Activated T-helper 2 cell treated with anti-CD3 and anti-CD28 coated beads, Interferon-gamma antibody, Interleukin-2, Interleukin-4, amounts not matched to agents 10 μg/mL and 5 μg/mL and 100 μg/mL, durations not matched to agents 14 hours and 24 hours and 36 hours (primary cell): ENCODE measurements at regions of chr18 and their contacts with region 1.

Region 1: GRCh38 chr18:9117980-9118841 is 15.7 kb downstream of the NDUFV2 start:
- DNase-seq: no peak
- H3K4me3 Mint-ChIP-seq: peak overlapping the region; percentile 39
- H3K27ac Mint-ChIP-seq: peak overlapping the region; percentile 84
- H3K4me1 Mint-ChIP-seq: peaks cover 51% of the 10 kb centered on the region
- H3K27me3 Mint-ChIP-seq: no peaks in the 10 kb centered on the region

Region 2: DNA sequence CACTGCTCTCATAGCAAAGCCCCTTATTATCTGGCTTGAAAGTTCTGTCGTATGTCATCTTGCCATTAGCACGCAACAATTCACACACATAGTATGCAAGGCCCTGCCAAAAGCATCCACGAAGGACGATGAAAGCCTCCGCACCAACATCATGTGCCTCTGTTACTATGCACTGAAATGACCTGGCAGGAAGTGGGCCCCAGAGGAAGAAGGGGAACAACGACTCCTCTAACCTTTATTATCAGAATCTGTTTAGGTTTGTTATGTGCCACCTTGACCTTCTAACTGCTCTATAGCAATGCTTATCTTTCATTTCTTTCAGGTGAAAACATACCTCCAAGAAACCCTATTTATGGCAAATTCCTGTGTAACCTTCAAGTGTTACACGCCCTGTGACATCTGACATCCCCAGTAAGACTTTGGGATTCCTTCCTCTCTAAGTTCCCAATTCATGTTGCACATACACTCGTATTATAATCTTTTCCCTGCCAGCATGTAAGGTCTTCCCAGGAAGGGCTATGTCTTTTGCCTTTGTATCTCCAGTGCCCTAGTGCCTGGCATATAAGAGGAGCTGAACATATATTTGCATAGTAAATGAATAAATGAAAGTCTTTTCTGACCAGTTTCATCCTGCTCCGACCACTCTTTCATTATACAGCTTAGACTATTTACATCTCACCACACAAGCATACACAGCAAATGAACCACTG is 22.8 kb before region 1 on chr18:
- intact Hi-C with region 1: loop called (anchors 1 kb)
- DNase-seq: peak; percentile 58
- H3K4me3 Mint-ChIP-seq: peak overlapping the region; percentile 62
- H3K27ac Mint-ChIP-seq: peak overlapping the region; percentile 99
- H3K4me1 Mint-ChIP-seq: peaks cover 66% of the 10 kb centered on the region
- H3K27me3 Mint-ChIP-seq: no peaks in the 10 kb centered on the region

Region 3: GRCh38 chr18:9102508-9103375 is 15.5 kb before region 1 on chr18 and contains the start of gene NDUFV2:
- intact Hi-C with region 1: loop called (anchors 1 kb)
- DNase-seq: peak; percentile 97
- H3K4me3 Mint-ChIP-seq: peak within 1 kb of the TSS; percentile 92
- H3K27ac Mint-ChIP-seq: peak within 1 kb of the TSS; percentile 97
- H3K4me1 Mint-ChIP-seq: peaks cover 57% of the 10 kb centered on the region
- H3K27me3 Mint-ChIP-seq: no peaks in the 10 kb centered on the region
- total RNA-seq, gene NDUFV2: 329 and 341 TPM in 2 replicates